PC-3 (cell line): ENCODE measurements at regions of chr18 and their contacts with region 1.

Region 1: DNA sequence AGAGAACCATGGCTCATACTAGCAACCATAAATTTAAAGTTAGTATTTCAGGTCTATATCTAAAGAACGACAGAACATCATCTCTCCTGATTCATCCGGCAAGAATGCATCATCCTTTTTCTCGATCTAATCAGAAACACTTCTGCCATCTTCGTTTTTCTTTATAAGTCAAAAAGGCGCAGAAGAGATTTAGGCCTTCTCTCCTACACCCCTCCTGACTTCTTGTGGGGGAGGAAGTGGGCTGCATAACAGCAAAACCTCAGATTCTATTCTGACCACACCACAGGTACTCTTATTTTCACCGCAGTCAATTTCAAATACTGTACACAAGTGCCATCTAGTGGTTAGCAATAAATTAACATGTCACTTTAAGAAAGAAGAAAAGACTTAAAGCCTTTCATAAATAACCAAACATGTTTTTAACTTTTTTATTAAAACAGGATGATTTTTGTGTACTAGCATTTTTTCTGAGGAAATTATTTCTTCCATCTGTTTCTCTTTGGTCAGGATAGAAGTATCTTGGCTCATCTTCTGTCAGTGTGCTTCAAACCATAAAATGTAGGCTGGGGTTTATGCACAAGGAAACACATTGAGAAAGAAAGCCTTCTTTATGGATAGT is 48.4 kb upstream of the PIK3C3 start:
- DNase-seq: peak; percentile 61
- ATAC-seq: peak; percentile 55
- H3K4me3 ChIP-seq: no peak overlapping the region
- H3K27ac ChIP-seq: no peak overlapping the region
- H3K4me1 ChIP-seq: peaks cover 9% of the 10 kb centered on the region; the same call in 1 of the 2 replicates
- H3K27me3 ChIP-seq: no peaks in the 10 kb centered on the region
- CTCF ChIP-seq: peak; percentile 58

Region 2: DNA sequence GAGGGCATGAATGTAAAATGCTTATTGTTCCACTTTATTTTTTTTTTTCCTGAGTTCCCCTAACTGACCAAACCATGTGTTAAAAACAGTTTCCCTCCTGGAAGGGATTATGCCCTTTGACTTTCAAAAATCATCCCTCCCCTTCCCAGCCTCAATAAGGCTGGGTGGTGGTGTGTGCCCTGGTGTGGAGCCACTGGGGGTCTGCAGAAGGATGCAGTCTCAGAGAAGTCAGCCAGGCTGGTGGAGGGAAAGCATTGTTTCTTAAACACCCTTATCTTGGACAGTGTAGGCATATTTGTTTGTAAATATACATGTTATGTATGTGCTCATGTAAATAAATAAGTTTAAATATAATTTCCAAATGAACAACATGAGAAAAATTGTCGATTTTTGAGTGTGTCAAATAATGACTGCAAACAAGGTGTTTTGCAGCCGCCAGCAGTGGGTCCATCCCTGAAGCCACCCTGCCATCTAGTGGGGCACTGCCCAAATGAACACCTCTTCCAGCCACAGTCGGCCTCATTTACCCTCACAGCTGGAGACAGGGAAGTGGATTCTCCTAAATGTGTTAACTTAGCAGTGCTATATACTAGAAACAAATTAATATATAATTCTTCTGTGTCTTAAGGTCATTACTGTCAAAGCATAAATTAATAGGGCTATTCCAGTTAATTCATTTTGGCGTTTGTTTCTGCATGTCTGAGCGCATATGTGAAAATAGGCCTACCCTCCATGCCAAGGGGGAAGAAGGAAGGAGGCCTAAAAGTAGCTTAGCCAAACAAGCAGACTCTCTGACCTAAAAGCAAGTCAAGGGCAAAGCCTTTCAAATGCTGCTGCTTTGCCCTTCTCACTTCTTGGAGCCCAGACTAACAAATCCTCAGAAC is 161.2 kb before region 1 on chr18:
- CTCF ChIA-PET with region 1: no interaction called
- POLR2A ChIA-PET with region 1: no interaction called
- intact Hi-C with region 1: loop called (anchors 2 kb)
- DNase-seq: peak; percentile 57
- ATAC-seq: peak; percentile 93
- H3K4me3 ChIP-seq: no peak overlapping the region
- H3K27ac ChIP-seq: no peak overlapping the region
- H3K4me1 ChIP-seq: peaks cover 10% of the 10 kb centered on the region; the same call in 1 of the 2 replicates
- H3K27me3 ChIP-seq: no peaks in the 10 kb centered on the region
- CTCF ChIP-seq: peak; percentile 65

Region 3: DNA sequence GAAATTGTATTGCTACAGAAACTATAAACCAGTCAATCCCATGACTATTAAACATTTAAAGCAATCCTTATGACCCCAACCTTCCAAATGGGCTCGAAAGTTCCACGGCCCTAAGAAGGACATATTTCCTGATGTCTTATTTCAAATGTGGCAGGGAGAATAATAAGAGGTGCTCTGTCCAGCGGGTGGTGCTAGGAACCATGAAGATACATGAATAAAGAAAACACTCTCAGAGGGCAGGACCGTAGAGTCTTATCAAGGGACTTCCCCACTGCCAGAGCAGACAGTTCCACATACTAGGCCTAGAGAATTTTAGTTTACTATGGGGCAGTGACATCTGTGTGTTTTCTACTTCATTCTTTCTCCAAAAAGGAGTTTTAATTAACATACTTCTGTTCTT is 138.7 kb before region 1 on chr18:
- CTCF ChIA-PET with region 1: no interaction called
- POLR2A ChIA-PET with region 1: no interaction called
- intact Hi-C with region 1: loop called (anchors 5 kb)
- DNase-seq: peak; percentile 25
- ATAC-seq: peak; percentile 60
- H3K4me3 ChIP-seq: no peak overlapping the region
- H3K27ac ChIP-seq: no peak overlapping the region
- H3K4me1 ChIP-seq: peaks cover 3% of the 10 kb centered on the region; the same call in 1 of the 2 replicates
- H3K27me3 ChIP-seq: no peaks in the 10 kb centered on the region
- CTCF ChIP-seq: peak; percentile 35; the same call in 1 of the 2 replicates